ENCODE measurements at regions of chr19 and their contacts with region 1.

Region 1: GRCh38 chr19:18044825-18045304 is 36.9 kb downstream of the ARRDC2 start:
- DNase-seq: peak; percentile 77 to 92 (median 79)
- H3K4me3 ChIP-seq: peak overlapping the region; percentile 7 to 8
- H3K4me3 Mint-ChIP-seq: peak overlapping the region; percentile 83 to 93 (median 89)
- H3K27ac ChIP-seq: peak overlapping the region; percentile 61
- H3K27ac Mint-ChIP-seq: peak overlapping the region; percentile 92 to 99 (median 97)
- H3K4me1 ChIP-seq: peaks cover 29% of the 10 kb centered on the region
- H3K4me1 Mint-ChIP-seq: peaks cover 21 to 50% (median 34%) of the 10 kb centered on the region in 4 donors
- H3K27me3 ChIP-seq: no peaks in the 10 kb centered on the region
- H3K27me3 Mint-ChIP-seq: no peaks in the 10 kb centered on the region

Region 2: DNA sequence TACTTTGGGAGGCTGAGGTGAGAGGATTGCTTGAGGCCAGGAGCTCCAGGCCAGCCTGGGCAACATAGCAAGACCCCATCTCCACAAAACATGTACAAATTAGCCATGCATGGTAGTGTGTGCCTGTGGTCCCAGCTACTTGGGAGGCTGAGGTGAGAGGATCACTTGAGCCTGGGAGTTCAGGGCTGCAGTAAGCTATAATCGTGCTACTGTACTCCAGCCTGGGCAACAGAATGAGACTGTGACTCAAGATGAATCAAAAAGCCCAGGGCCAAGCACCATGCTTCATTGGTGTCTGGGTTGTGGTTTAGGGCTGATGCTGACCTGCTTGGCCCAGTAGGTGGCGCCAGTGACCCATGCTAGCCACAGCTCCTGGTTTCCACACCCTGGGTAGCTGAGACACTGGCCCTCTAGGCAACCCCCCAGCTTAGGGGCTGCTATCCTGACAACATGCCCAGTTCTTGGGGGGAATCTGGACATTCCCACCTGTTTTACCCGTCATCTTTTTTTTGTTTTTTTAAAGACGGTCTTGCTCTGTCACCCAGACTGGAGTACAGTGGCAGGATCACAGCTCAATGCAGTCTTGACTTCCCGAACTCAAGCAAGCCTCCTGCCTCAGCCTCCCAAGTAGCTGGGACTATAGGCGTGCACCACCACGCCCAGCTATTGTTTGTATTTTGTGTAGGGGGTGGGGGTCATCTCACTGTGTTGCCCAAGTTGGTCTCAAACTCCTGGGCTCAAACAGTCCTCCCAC is 106.6 kb before region 1 on chr19:
- CTCF ChIA-PET with region 1: interaction called, 13 read pairs
- POLR2A ChIA-PET with region 1: interaction called, 4 read pairs
- intact Hi-C with region 1: no loop called
- DNase-seq: peak; percentile 77 to 82 (median 80)
- H3K4me3 ChIP-seq: no peak overlapping the region
- H3K4me3 Mint-ChIP-seq: no peak overlapping the region
- H3K27ac ChIP-seq: no peak overlapping the region
- H3K27ac Mint-ChIP-seq: peak overlapping the region in 1 of 7 donors; percentile 52
- H3K4me1 ChIP-seq: peaks cover 7% of the 10 kb centered on the region
- H3K4me1 Mint-ChIP-seq: peaks cover 4 to 10% (median 7%) of the 10 kb centered on the region in 4 donors
- H3K27me3 ChIP-seq: no peaks in the 10 kb centered on the region
- H3K27me3 Mint-ChIP-seq: no peaks in the 10 kb centered on the region

Region 3: DNA sequence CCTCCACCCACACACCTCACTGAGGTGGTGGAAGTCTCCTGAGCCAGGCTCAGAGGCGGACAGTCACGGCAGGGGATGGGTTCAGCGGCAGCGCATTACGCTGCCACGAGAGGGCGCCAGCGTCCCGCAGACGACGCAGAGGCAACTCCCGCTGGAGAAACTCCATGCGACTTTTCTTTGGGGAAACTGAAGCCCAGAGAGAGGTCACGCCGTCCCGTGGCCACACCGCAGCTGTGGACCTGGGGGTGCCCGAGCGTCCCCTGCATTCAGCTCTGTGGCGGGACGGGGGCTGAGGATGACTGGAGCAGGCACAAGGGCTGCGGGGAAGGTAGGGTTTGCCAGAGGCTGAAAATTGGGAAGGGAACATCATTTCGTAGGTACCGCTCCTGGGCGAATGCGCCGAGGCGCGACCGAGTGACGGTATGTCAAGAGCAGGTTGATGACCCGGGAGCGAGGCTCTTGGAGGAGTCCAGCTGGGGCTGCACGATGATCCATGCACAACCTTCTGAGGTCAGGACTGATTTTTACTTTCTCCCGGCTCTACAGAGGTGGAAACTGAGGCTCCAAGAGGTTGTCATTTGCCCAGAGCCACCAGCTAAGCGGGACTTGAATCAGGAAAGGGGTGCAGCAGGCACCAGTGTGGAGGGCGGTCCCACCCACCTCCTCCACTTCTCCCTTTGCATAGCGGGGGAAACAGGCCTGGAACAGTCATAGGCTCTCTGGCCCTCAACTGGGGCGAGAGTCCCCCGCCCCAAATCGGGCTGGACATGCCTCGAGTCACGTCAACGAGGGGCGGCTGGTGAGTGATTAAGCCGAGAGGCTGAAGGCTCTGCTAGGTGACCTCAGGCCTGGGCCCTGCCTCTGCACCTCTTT is 37.6 kb before region 1 on chr19:
- CTCF ChIA-PET with region 1: interaction called, 27 read pairs
- POLR2A ChIA-PET with region 1: interaction called, 69 read pairs
- intact Hi-C with region 1: loop called (anchors 1 kb)
- DNase-seq: peak; percentile 75 to 85 (median 79)
- H3K4me3 ChIP-seq: peak overlapping the region; percentile 18 to 68
- H3K4me3 Mint-ChIP-seq: peak overlapping the region; percentile 86 to 95 (median 90)
- H3K27ac ChIP-seq: peak overlapping the region; percentile 95
- H3K27ac Mint-ChIP-seq: peak overlapping the region; percentile 95 to 100 (median 97)
- H3K4me1 ChIP-seq: peaks cover 56% of the 10 kb centered on the region
- H3K4me1 Mint-ChIP-seq: peaks cover 10 to 59% (median 28%) of the 10 kb centered on the region in 4 donors
- H3K27me3 ChIP-seq: no peaks in the 10 kb centered on the region
- H3K27me3 Mint-ChIP-seq: no peaks in the 10 kb centered on the region

Region 4: DNA sequence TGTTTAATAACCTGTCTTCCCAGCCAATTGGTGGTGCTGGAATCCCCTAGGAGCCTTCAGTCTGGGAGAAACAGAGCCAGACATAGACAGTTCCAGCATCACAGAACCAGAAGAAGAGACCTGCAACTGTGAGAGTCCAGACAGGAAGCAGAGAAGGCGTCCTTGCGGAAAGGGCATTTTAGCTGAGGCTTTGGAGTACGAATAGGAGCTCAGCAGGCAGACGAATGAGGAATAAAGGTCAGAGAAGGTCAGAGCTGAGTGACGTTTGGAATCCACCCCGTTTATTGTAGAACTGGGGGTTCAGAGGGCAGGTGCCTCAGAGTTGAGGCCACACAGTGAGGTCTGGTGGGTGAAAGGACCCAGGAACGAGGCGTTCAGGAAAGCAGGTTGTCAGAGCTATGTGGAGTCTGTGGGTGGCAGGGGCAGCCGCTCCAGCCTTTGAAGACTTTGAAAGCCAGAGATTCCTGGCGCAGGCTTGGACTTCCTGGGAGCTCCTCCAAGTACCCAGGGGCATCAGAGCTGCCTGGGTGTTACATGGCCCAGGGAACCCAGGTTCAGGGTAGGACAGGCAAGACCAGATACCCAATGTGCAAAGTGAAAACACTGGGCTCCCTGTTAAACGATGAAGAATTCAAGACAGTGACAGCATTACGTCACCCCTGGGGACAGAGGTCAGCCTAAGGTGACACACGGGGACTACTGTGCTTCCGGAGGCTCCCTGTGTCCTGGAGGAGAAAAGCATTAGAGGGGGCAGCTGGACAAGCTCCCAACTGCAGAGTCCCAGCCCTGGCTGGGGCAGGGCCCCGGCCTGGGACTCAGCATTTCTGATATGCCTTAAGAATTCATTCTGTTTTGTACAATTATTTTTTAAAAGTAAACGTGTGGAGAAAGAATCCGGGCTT is 31.4 kb before region 1 on chr19:
- CTCF ChIA-PET with region 1: interaction called, 27 read pairs
- POLR2A ChIA-PET with region 1: interaction called, 69 read pairs
- intact Hi-C with region 1: no loop called
- DNase-seq: no peak
- H3K4me3 ChIP-seq: no peak overlapping the region
- H3K4me3 Mint-ChIP-seq: peak overlapping the region in 7 of 8 donors; percentile 23 to 88 (median 81)
- H3K27ac ChIP-seq: peak overlapping the region; percentile 42
- H3K27ac Mint-ChIP-seq: peak overlapping the region; percentile 94 to 99 (median 97)
- H3K4me1 ChIP-seq: peaks cover 77% of the 10 kb centered on the region
- H3K4me1 Mint-ChIP-seq: peaks cover 31 to 68% (median 53%) of the 10 kb centered on the region in 4 donors
- H3K27me3 ChIP-seq: no peaks in the 10 kb centered on the region
- H3K27me3 Mint-ChIP-seq: no peaks in the 10 kb centered on the region

Region 5: GRCh38 chr19:18021121-18021755 is 23.6 kb before region 1 on chr19:
- CTCF ChIA-PET with region 1: interaction called, 5 read pairs
- POLR2A ChIA-PET with region 1: interaction called, 85 read pairs
- intact Hi-C with region 1: loop called (anchors 2 kb)
- DNase-seq: peak; percentile 57 to 91 (median 64)
- H3K4me3 ChIP-seq: no peak overlapping the region
- H3K4me3 Mint-ChIP-seq: peak overlapping the region; percentile 45 to 85 (median 68)
- H3K27ac ChIP-seq: peak overlapping the region; percentile 66
- H3K27ac Mint-ChIP-seq: peak overlapping the region; percentile 91 to 99 (median 96)
- H3K4me1 ChIP-seq: peaks cover 61% of the 10 kb centered on the region
- H3K4me1 Mint-ChIP-seq: peaks cover 41 to 76% (median 60%) of the 10 kb centered on the region in 4 donors
- H3K27me3 ChIP-seq: no peaks in the 10 kb centered on the region
- H3K27me3 Mint-ChIP-seq: no peaks in the 10 kb centered on the region

Region 6: DNA sequence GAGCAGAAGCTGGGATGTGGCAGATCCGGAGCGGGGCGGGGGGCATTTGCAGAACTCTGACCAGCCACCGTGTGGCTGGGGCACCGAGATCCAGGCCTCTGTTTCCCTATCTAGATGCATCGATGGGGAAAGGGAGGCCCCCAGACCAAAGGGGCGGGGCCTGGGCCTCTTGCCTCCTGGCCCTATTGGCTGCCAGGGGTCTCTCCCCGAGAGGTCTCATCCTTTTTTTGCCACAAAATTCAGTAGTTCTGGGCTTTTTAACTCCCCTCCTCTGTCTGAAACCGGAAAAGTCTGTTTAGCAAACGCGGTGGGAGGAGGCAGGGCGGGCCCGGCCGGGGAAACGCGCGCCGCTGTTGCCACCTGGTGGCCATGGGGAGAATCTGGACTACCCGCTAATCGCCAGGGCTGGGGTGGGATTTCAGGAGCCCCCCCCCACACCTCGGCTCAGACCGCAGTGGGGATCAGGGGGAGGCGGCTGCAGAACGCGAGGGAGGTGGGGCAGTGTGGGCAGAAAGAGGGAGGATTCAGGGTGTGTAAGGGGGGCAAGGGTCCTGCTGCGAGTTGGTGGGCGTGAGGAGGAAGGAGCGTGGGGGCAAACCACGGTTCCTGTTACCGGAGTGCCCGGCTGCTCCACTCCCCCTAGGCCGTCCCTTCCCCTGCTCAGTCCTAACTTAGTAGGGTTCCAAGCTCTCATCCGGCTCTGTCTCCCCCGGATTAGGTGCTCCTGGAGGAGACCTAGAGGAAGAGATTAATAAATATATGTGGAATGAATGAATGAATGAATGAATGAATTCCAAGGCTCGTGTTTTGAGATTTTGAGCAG is 13.6 kb after region 1 on chr19:
- CTCF ChIA-PET with region 1: interaction called, 29 read pairs
- POLR2A ChIA-PET with region 1: interaction called, 15 read pairs
- intact Hi-C with region 1: loop called (anchors 1 kb)
- DNase-seq: peak; percentile 75 to 85 (median 82)
- H3K4me3 ChIP-seq: no peak overlapping the region
- H3K4me3 Mint-ChIP-seq: peak overlapping the region in 5 of 8 donors; percentile 22 to 64 (median 39)
- H3K27ac ChIP-seq: peak overlapping the region; percentile 44
- H3K27ac Mint-ChIP-seq: peak overlapping the region; percentile 66 to 96 (median 88)
- H3K4me1 ChIP-seq: peaks cover 11% of the 10 kb centered on the region
- H3K4me1 Mint-ChIP-seq: peaks cover 9 to 15% (median 12%) of the 10 kb centered on the region in 4 donors
- H3K27me3 ChIP-seq: no peaks in the 10 kb centered on the region
- H3K27me3 Mint-ChIP-seq: no peaks in the 10 kb centered on the region

Region 7: DNA sequence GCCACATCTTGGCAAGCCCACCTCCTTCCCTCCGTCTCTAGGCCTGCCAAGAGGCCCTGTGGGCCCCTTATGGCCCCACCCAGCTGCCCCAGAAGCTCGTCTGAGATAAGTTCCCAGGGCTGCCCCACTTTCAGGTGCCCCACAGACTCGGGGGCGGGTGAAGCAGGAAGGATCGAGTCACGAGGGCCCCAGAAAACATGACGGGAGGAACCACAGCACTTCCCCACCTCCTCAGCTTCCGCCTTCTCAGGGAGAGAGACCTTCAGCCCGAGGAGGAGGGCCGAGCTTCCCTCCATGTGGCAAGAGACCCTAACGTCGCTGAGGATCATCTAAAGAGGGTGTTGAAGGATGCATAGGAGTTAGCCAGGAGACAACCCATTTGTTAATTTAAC is 46.3 kb after region 1 on chr19:
- CTCF ChIA-PET with region 1: interaction called, 4 read pairs
- POLR2A ChIA-PET with region 1: interaction called, 14 read pairs
- intact Hi-C with region 1: no loop called
- DNase-seq: peak; percentile 81 to 91 (median 83)
- H3K4me3 ChIP-seq: peak overlapping the region in 1 of 2 donors; percentile 16
- H3K4me3 Mint-ChIP-seq: peak overlapping the region in 7 of 8 donors; percentile 68 to 83 (median 75)
- H3K27ac ChIP-seq: peak overlapping the region; percentile 85
- H3K27ac Mint-ChIP-seq: peak overlapping the region; percentile 98 to 100 (median 99)
- H3K4me1 ChIP-seq: peaks cover 68% of the 10 kb centered on the region
- H3K4me1 Mint-ChIP-seq: peaks cover 39 to 76% (median 55%) of the 10 kb centered on the region in 4 donors
- H3K27me3 ChIP-seq: no peaks in the 10 kb centered on the region
- H3K27me3 Mint-ChIP-seq: no peaks in the 10 kb centered on the region